Common myeloid progenitor, CD34-positive (primary cell): ENCODE measurements at regions of chr19 and their contacts with region 1.

Region 1: GRCh38 chr19:16143399-16144245 is at the start of gene HSH2D:
- DNase-seq: peak; percentile 84 to 94 (median 92)
- H3K4me3 ChIP-seq: peak within 1 kb of the TSS; percentile 40 to 94 (median 72)
- H3K27ac ChIP-seq: peak within 1 kb of the TSS; percentile 69 to 81
- H3K4me1 ChIP-seq: peaks cover 10 to 94% (median 87%) of the 10 kb centered on the region in 4 experiments
- H3K27me3 ChIP-seq: no peaks in the 10 kb centered on the region

Region 2: DNA sequence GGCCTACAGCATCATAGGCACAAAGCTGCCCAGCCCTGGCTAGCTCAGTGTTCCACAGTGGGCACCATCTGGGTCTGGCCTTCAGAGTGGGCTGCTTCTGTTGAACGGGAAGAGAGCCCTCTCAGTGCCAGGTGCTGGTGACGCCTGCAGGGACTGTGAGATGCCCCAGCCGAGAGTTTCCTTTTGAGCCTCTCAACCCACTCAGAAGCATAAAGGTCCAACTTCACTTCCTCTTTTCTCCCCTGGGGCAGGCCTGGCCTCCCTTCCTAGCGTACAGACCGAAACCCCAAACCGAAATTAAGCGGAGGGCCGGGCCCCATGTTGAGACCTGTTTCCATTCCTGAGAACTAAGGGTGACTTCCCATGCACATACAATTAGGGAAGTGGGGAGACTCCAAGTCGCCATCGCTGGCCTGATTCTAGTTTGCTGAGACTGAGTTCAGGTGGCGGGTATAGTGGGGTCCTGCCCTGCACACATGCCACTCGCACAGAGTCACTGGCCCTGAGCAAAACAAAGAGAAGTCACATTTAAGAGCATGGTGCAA is 25.1 kb before region 1 on chr19:
- CTCF ChIA-PET with region 1: interaction called, 15 read pairs
- POLR2A ChIA-PET with region 1: interaction called, 11 read pairs
- DNase-seq: peak; percentile 82 to 95 (median 94)
- H3K4me3 ChIP-seq: peak overlapping the region in 4 of 7 experiments; percentile 20 to 49 (median 34)
- H3K27ac ChIP-seq: peak overlapping the region; percentile 46 to 65
- H3K4me1 ChIP-seq: peaks cover 7 to 69% (median 67%) of the 10 kb centered on the region in 4 experiments
- H3K27me3 ChIP-seq: no peaks in the 10 kb centered on the region